Activated B cell treated with CpG ODN at 0.5 μM for 24 hours (primary cell): ENCODE measurements at regions of chr2 and their contacts with region 1.

Region 1: GRCh38 chr2:96856776-96857673 is 791 bp downstream of the ANKRD39 start:
- DNase-seq: no peak
- ATAC-seq: no peak
- H3K4me3 Mint-ChIP-seq: peak overlapping the region; percentile 86
- H3K27ac Mint-ChIP-seq: peak overlapping the region; percentile 63
- H3K4me1 Mint-ChIP-seq: peaks cover 16% of the 10 kb centered on the region
- H3K27me3 Mint-ChIP-seq: no peaks in the 10 kb centered on the region
- CTCF ChIP-seq: no peak

Region 2: DNA sequence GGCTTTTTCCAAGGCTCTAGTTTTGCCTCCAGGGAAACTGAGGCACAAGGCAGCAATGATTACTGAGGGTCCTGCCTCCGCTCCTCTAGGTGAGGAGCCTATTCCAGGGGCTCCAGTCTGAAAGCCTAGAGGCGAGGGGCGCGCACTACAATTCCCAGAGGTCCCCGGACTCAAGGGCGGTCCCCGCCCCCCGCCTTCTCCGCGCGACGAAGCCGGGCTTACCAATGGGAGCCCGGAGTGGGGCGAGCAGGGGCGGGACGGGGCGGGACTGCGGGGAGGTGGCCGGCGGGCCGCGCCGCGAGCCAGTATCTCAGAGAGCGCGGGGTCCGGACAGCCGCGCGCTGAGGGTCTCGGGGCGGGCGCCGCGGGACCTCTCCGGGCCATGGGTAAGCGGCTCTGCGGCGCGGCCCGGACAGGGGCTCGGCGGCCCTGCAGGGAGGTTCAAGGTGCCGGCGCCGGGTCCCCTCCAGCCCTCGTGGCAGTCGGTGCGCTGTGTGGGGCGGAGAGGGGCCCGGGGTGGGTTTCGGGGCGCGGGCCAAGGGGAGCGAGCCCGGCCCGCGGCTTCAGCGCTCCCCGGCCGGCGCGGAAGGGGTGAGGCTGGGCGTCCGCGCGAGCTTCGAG is 320.5 kb before region 1 on chr2 and contains the start of gene ARID5A:
- CTCF ChIA-PET with region 1: no interaction called
- POLR2A ChIA-PET with region 1: no interaction called
- intact Hi-C with region 1: loop called (anchors 5 kb)
- DNase-seq: peak; percentile 79
- ATAC-seq: peak; percentile 74
- H3K4me3 Mint-ChIP-seq: peak within 1 kb of the TSS; percentile 91
- H3K27ac Mint-ChIP-seq: peak within 1 kb of the TSS; percentile 90
- H3K4me1 Mint-ChIP-seq: peaks cover 53% of the 10 kb centered on the region
- H3K27me3 Mint-ChIP-seq: no peaks in the 10 kb centered on the region
- CTCF ChIP-seq: no peak
- total RNA-seq, gene ARID5A: 73.4 and 83.5 TPM in 2 replicates

Region 3: DNA sequence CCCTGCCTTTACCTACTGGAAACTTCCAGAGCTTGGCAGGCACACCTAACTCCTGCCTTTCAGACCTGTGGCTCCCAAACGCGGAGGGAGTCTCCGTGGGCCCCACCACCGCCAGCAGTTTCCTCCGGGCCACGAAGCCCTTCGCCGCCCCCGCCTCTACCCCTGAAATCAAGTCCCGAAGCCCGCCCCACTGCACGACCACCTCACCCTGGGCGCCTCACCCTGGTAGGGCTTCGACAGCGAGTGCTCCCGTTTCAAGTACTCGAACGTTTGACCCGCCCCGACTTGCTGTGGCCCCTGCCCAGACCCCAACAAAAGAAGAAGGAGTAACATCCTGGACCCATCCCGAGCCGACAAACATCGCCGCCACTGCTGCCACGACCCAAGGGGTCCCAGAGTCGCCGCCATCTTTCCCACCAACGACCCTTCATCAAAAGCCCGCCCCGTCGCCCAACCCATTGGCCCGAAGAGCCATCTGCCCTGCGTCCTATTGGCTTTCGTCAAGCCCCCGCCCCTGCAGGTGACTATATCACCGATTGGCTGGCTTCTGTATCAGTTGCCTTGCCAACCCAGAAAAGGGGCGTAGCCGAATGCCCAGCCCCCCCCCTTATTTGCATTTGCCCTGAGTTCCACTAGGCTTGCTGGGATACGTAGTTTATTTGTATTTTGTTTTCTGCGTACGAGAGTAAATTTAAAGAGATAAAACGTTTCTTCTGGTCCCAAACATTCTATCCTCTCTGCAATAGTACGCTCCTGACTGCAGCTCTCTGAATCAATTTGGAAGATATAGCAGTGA is 117.2 kb before region 1 on chr2 and contains the start of gene LMAN2L:
- CTCF ChIA-PET with region 1: interaction called, 3 read pairs
- POLR2A ChIA-PET with region 1: no interaction called
- intact Hi-C with region 1: loop called (anchors 1 kb)
- DNase-seq: peak; percentile 88
- ATAC-seq: peak; percentile 99
- H3K4me3 Mint-ChIP-seq: peak within 1 kb of the TSS; percentile 98
- H3K27ac Mint-ChIP-seq: peak within 1 kb of the TSS; percentile 94
- H3K4me1 Mint-ChIP-seq: peaks cover 33% of the 10 kb centered on the region
- H3K27me3 Mint-ChIP-seq: no peaks in the 10 kb centered on the region
- CTCF ChIP-seq: no peak
- total RNA-seq, gene LMAN2L: 7.1 and 8.9 TPM in 2 replicates

Region 4: GRCh38 chr2:96816128-96816835 is 40.7 kb before region 1 on chr2 and contains the start of gene CNNM3:
- CTCF ChIA-PET with region 1: interaction called, 11 read pairs
- POLR2A ChIA-PET with region 1: interaction called, 15 read pairs
- intact Hi-C with region 1: loop called (anchors 1 kb)
- DNase-seq: peak; percentile 97
- ATAC-seq: peak; percentile 93
- H3K4me3 Mint-ChIP-seq: peak within 1 kb of the TSS; percentile 88
- H3K27ac Mint-ChIP-seq: peak within 1 kb of the TSS; percentile 83
- H3K4me1 Mint-ChIP-seq: peaks cover 56% of the 10 kb centered on the region
- H3K27me3 Mint-ChIP-seq: no peaks in the 10 kb centered on the region
- CTCF ChIP-seq: no peak
- total RNA-seq, gene CNNM3: 19.0 and 20.3 TPM in 2 replicates

Region 5: DNA sequence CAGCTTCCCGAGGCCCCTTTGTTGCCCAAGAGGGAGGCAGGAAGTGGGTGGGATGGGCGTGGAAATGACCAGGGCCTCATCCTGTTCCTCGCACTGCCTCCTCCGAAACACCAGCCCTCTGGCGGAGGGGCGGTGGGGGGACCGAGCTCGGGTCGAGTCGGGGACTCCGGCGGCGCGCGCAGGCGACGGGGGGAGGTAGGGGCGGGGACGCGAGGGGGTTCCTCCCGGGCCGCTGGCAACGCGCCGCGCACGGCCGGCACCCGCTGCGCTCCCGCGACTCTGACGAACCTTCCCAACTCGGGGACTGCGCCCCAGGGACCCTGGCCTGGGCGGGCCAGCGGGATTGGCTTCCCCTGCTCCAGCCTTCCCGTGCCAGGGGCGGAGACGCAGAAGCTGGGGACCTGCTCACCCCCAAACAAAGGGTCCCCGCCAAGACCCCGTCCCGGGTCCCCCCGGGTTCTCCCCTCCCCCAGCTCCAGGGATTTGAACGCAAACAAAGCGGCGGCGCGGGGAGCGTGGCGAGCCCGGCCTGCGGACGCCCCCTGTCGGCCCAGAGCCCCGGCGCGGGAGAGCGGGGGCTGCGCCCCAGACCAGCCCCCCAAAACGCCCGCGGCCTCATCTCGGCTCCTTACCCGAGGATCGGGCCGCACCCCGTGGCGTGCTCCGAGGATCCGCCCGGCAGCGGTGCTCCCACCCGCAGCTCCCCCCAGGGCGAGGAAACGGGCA is 11.7 kb after region 1 on chr2:
- CTCF ChIA-PET with region 1: interaction called, 33 read pairs
- POLR2A ChIA-PET with region 1: interaction called, 27 read pairs
- intact Hi-C with region 1: loop called (anchors 1 kb)
- DNase-seq: peak; percentile 40
- ATAC-seq: peak; percentile 39
- H3K4me3 Mint-ChIP-seq: peak overlapping the region; percentile 75
- H3K27ac Mint-ChIP-seq: no peak overlapping the region
- H3K4me1 Mint-ChIP-seq: peaks cover 27% of the 10 kb centered on the region
- H3K27me3 Mint-ChIP-seq: peaks cover 26% of the 10 kb centered on the region
- CTCF ChIP-seq: no peak

Region 6: DNA sequence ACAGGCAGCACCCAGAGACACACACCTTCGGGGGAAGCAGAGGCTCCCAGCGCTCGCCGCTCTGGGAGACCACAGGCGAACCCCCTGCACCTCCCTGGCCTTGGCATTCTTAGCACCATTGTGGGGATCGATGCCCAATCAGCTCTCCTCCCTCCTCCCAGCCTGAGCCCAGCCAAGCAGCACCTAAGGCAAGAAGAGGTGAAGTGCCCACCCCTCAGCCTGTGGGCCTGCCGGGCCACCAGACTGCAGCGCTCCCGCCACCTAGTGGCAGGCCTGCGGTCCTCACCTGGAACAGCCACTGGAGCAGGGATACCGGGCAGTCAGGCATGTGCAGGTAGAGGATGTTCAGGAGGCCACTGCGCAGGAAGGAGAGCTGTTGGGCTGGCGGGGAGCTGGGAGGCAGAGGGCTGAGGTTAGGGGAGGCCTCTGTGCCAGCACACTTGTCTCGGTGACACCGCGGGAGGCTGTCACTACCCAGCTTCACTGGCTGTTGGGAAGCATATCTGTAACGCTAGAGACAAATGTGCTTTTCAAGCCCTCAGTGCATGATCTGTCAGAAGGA is 94.1 kb after region 1 on chr2:
- CTCF ChIA-PET with region 1: interaction called, 57 read pairs
- POLR2A ChIA-PET with region 1: interaction called, 3 read pairs
- intact Hi-C with region 1: loop called (anchors 1 kb)
- DNase-seq: peak; percentile 59
- ATAC-seq: peak; percentile 97
- H3K4me3 Mint-ChIP-seq: no peak overlapping the region
- H3K27ac Mint-ChIP-seq: no peak overlapping the region
- H3K4me1 Mint-ChIP-seq: peaks cover 11% of the 10 kb centered on the region
- H3K27me3 Mint-ChIP-seq: peaks cover 15% of the 10 kb centered on the region
- CTCF ChIP-seq: no peak

Region 7: GRCh38 chr2:97011977-97012565 is 155.0 kb after region 1 on chr2:
- CTCF ChIA-PET with region 1: interaction called, 8 read pairs
- POLR2A ChIA-PET with region 1: no interaction called
- intact Hi-C with region 1: loop called (anchors 2 kb)
- DNase-seq: no peak
- ATAC-seq: peak; percentile 34
- H3K4me3 Mint-ChIP-seq: no peak overlapping the region
- H3K27ac Mint-ChIP-seq: no peak overlapping the region
- H3K4me1 Mint-ChIP-seq: no peaks in the 10 kb centered on the region
- H3K27me3 Mint-ChIP-seq: peaks cover 7% of the 10 kb centered on the region
- CTCF ChIP-seq: no peak